T-cell (primary cell): ENCODE measurements at regions of chr1 and their contacts with region 1.

Region 1: DNA sequence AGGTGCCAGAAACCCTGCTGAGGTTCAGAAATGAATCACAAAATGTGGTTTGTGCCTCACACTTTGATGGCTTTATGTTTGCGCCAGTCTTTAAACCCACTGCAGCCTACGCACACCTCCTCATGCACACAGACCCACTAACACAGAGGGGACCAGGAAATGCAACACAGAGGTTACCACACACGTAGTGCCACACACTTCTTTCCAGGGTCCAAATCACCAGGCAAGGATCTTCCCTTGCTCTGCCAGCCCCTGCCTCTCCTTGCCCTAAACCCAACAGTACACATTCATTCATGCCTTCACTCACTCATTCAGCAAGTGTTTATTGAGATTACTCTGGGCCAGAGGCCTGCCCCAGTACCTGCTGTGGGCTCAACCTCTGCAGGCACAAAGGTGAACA is 17.5 kb downstream of the MAB21L3 start:
- DNase-seq: peak in 10 of 35 experiments; percentile 13 to 47 (median 24)
- ATAC-seq: peak; percentile 85 to 88 (median 86)
- H3K4me3 ChIP-seq: no peak overlapping the region
- H3K4me3 Mint-ChIP-seq: peak overlapping the region in 1 of 3 donors; percentile 64
- H3K27ac ChIP-seq: no peak overlapping the region
- H3K27ac Mint-ChIP-seq: peak overlapping the region; percentile 31 to 68
- H3K4me1 ChIP-seq: peaks cover 23 to 24% of the 10 kb centered on the region in 2 experiments
- H3K4me1 Mint-ChIP-seq: peaks cover 38 to 44% (median 41%) of the 10 kb centered on the region in 3 donors
- H3K27me3 ChIP-seq: peaks cover 0 to 24% of the 10 kb centered on the region in 2 experiments
- H3K27me3 Mint-ChIP-seq: peaks cover 7 to 8% of the 10 kb centered on the region in 2 donors

Region 2: GRCh38 chr1:116817582-116818064 is 689.0 kb after region 1 on chr1:
- CTCF ChIA-PET with region 1: interaction called in 1 of 2 experiments, 10 read pairs
- POLR2A ChIA-PET with region 1: no interaction called
- DNase-seq: peak; percentile 39 to 86 (median 60)
- ATAC-seq: peak; percentile 71 to 77 (median 74)
- H3K4me3 ChIP-seq: no peak overlapping the region
- H3K4me3 Mint-ChIP-seq: peak overlapping the region in 2 of 3 donors; percentile 34 to 70
- H3K27ac ChIP-seq: peak overlapping the region; percentile 61
- H3K27ac Mint-ChIP-seq: peak overlapping the region; percentile 64 to 80
- H3K4me1 ChIP-seq: peaks cover 23 to 27% of the 10 kb centered on the region in 2 experiments
- H3K4me1 Mint-ChIP-seq: peaks cover 28 to 33% (median 32%) of the 10 kb centered on the region in 3 donors
- H3K27me3 ChIP-seq: no peaks in the 10 kb centered on the region
- H3K27me3 Mint-ChIP-seq: no peaks in the 10 kb centered on the region